ENCODE measurements at regions of chr6 and their contacts with region 1.

Region 1: GRCh38 chr6:88641178-88641903 is 322.1 kb downstream of the RNGTT start:
- DNase-seq: no peak
- H3K4me3 ChIP-seq: no peak overlapping the region
- H3K27ac ChIP-seq: no peak overlapping the region
- H3K4me1 ChIP-seq: peaks cover 0 to 2% (median 0%) of the 10 kb centered on the region in 4 experiments; a peak in 1 of 7 replicates
- H3K27me3 ChIP-seq: no peaks in the 10 kb centered on the region
- CTCF ChIP-seq: no peak
- EP300 ChIP-seq: no peak
- POLR2A ChIP-seq: no peak
- RAD21 ChIP-seq: no peak

Region 2: DNA sequence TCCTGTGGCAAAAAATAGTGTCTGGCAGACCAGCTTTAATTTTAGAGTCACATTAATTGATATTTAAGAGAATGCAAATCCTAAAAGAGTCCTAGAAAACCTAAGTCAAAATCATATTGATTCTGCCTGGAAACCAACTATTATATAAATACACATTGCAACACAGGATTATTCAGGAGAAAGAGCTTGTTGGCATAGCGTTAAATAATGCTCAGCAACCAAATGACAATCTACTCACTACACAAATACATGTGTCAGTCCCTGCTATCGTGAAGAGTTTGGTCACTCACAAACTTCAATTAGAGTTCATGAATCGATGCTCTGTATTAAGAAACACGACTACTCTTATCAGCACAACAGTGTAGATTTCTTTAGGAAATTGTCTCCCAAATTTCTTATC is 1600.6 kb before region 1 on chr6:
- CTCF ChIA-PET with region 1: no interaction called
- POLR2A ChIA-PET with region 1: no interaction called
- DNase-seq: no peak
- H3K4me3 ChIP-seq: no peak overlapping the region
- H3K27ac ChIP-seq: no peak overlapping the region
- H3K4me1 ChIP-seq: no peaks in the 10 kb centered on the region; a peak in 2 of 7 replicates
- H3K27me3 ChIP-seq: no peaks in the 10 kb centered on the region
- CTCF ChIP-seq: no peak
- EP300 ChIP-seq: no peak
- POLR2A ChIP-seq: no peak
- RAD21 ChIP-seq: no peak

Region 3: GRCh38 chr6:88584581-88585275 is 56.6 kb before region 1 on chr6:
- CTCF ChIA-PET with region 1: no interaction called
- POLR2A ChIA-PET with region 1: no interaction called
- DNase-seq: no peak
- H3K4me3 ChIP-seq: no peak overlapping the region
- H3K27ac ChIP-seq: no peak overlapping the region
- H3K4me1 ChIP-seq: peaks cover 0 to 9% (median 5%) of the 10 kb centered on the region in 4 experiments; a peak in 4 of 7 replicates
- H3K27me3 ChIP-seq: no peaks in the 10 kb centered on the region
- CTCF ChIP-seq: no peak
- EP300 ChIP-seq: no peak
- POLR2A ChIP-seq: no peak
- RAD21 ChIP-seq: no peak

Region 4: GRCh38 chr6:88629838-88630494 is 11.4 kb before region 1 on chr6:
- CTCF ChIA-PET with region 1: interaction called, 12 read pairs
- POLR2A ChIA-PET with region 1: no interaction called
- DNase-seq: peak; percentile 19 to 62
- H3K4me3 ChIP-seq: no peak overlapping the region
- H3K27ac ChIP-seq: no peak overlapping the region
- H3K4me1 ChIP-seq: peaks cover 0 to 6% (median 2%) of the 10 kb centered on the region in 4 experiments; a peak in 2 of 7 replicates
- H3K27me3 ChIP-seq: no peaks in the 10 kb centered on the region
- CTCF ChIP-seq: peak; percentile 23 to 69 (median 35); a peak in 3 of 4 replicates
- EP300 ChIP-seq: no peak
- POLR2A ChIP-seq: no peak
- RAD21 ChIP-seq: peak; percentile 45 to 56; a peak in 3 of 4 replicates

Region 5: GRCh38 chr6:88705601-88706000 is 64.3 kb after region 1 on chr6:
- CTCF ChIA-PET with region 1: no interaction called
- POLR2A ChIA-PET with region 1: no interaction called
- DNase-seq: no peak
- H3K4me3 ChIP-seq: no peak overlapping the region
- H3K27ac ChIP-seq: no peak overlapping the region
- H3K4me1 ChIP-seq: no peaks in the 10 kb centered on the region
- H3K27me3 ChIP-seq: no peaks in the 10 kb centered on the region
- CTCF ChIP-seq: no peak
- EP300 ChIP-seq: no peak
- POLR2A ChIP-seq: no peak
- RAD21 ChIP-seq: no peak